ENCODE measurements at regions of chr17 and their contacts with region 1.

Region 1: GRCh38 chr17:18960803-18961511 is 9.0 kb downstream of the SLC5A10 start:
- DNase-seq: peak; percentile 72
- H3K27ac ChIP-seq: 0 out of 2 replicates have a peak overlapping the region, but pooled peaks have one; percentile 1
- CTCF ChIP-seq: peak; percentile 93

Region 2: DNA sequence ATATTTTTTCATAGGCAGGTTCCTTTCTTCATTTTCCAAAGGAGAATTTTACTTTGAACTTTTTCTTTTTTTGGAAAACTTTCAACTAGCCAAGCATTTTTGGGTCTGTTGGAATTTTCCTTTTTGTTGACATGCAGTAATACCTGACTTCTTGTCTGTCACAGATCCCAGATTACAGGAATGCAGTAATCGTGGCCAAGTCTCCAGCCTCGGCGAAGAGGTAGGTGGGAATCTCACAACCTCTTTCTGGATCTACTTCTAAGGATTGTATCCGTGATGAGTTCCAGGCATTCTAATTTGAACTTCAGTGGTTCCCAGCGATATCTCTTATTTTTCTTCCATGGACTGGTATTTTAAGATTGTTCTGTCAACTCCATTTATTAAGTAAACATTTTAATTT is 71.3 kb before region 1 on chr17:
- CTCF ChIA-PET with region 1: no interaction called
- POLR2A ChIA-PET with region 1: no interaction called
- DNase-seq: no peak
- H3K27ac ChIP-seq: no peak overlapping the region
- CTCF ChIP-seq: no peak

Region 3: DNA sequence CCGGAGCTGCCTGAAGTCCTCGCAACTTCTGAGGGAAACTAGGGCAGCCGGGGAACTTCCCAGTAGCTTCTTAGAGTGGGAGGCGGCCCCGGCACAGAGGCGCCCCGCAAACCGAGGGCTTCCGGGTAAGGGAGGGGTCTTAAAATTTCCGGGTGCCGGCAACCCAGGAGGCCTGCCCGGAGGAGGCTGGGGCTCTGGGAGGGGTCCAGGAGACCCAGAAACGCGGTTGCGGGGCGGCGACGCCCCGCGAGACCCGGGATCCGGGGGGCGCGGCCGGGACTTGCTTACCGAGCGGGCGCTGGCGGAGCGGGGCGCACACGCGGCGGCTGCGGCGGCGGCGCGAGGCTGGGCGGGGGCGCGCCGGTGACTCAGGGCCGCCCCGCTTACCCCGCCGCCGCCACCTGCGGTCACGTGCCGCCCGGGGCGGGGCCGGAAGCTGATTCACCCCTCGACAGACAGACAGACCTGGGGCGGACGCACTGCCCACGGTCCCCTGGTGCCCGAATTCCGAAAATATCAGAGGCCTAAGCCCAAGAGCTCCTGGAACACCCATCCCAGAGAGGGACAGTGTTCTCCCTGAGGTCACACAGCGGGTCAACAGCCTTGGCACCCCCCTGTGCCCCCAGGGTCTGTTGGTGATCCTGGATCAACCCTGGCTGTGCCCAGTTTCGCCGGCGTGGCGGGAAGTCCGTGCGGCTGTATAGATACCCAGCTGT is 43.6 kb after region 1 on chr17 and contains the start of gene FAM83G:
- CTCF ChIA-PET with region 1: interaction called, 12 read pairs
- POLR2A ChIA-PET with region 1: no interaction called
- DNase-seq: peak; percentile 84
- H3K27ac ChIP-seq: peak within 1 kb of the TSS; percentile 97
- CTCF ChIP-seq: no peak

Measured in RWPE1 (cell line).